Activated B cell treated with CpG ODN at 0.5 μM for 24 hours (primary cell): ENCODE measurements at regions of chr2 and their contacts with region 1.

Region 1: GRCh38 chr2:227766373-227766883 is 20.7 kb downstream of the SCYGR8 start:
- DNase-seq: peak; percentile 40
- ATAC-seq: peak; percentile 90
- H3K4me3 Mint-ChIP-seq: no peak overlapping the region
- H3K27ac Mint-ChIP-seq: no peak overlapping the region
- H3K4me1 Mint-ChIP-seq: no peaks in the 10 kb centered on the region
- H3K27me3 Mint-ChIP-seq: peaks cover 2% of the 10 kb centered on the region
- CTCF ChIP-seq: peak; percentile 68

Region 2: DNA sequence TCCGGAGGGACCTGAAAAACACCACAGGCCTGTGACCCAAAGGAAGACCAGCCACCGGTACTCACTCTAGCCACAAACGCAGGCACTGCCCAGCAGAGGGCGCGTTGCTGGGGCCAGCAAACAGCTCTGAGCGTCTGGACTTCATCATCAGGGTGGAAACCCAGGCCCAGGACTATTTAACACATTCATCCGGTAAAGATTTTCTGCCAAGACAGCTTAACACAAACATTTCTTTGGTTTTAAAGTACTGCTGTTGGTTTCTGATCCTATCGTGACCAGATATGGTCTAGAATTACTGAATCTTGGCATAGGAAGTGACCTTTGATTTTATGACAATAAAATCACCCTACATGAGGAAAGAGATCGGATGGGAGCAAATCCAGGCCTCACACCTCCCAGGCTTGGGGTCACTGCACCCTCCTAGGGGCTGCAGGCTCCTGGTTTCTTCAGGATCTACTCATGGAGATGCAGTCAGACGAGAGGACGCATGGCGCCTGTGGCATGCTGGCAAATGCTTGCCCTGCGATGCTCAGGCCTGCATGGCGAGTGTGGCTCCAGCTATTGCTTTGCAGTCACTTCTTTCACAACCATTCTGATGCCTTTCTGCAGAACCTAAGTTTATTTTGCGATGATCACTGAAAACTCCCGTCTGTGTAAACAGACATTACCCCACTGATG is 732.8 kb before region 1 on chr2:
- CTCF ChIA-PET with region 1: interaction called, 3 read pairs
- POLR2A ChIA-PET with region 1: no interaction called
- intact Hi-C with region 1: loop called (anchors 10 kb)
- DNase-seq: no peak
- ATAC-seq: no peak
- H3K4me3 Mint-ChIP-seq: no peak overlapping the region
- H3K27ac Mint-ChIP-seq: no peak overlapping the region
- H3K4me1 Mint-ChIP-seq: no peaks in the 10 kb centered on the region
- H3K27me3 Mint-ChIP-seq: no peaks in the 10 kb centered on the region
- CTCF ChIP-seq: no peak

Region 3: GRCh38 chr2:227238238-227239237 is 527.9 kb before region 1 on chr2:
- CTCF ChIA-PET with region 1: interaction called, 39 read pairs
- POLR2A ChIA-PET with region 1: no interaction called
- intact Hi-C with region 1: loop called (anchors 1 kb)
- DNase-seq: peak; percentile 28
- ATAC-seq: peak; percentile 37
- H3K4me3 Mint-ChIP-seq: no peak overlapping the region
- H3K27ac Mint-ChIP-seq: no peak overlapping the region
- H3K4me1 Mint-ChIP-seq: no peaks in the 10 kb centered on the region
- H3K27me3 Mint-ChIP-seq: no peaks in the 10 kb centered on the region
- CTCF ChIP-seq: peak; percentile 99

Region 4: DNA sequence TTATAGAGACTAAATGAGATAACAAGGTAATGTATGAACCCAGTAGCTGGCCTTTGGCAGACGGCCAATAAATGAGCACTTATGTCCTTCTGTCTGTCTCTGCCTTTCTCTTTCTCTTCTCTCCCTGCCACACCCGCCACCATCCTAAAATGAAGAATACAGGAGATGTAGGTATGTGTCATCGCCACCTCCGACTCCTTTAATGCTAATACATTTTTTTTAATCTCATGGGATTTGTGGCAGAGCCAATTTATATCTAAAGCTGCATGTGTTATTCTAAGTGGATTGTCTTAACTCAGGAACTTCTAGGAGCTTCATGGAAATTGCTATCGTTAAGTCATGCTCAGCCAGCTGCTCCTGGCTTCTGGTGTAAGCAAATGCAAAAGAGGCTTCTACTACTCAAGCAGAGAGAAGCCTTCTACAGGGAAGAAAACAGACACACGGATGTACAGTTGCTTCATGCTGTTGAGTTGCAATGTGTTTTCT is 389.5 kb before region 1 on chr2:
- CTCF ChIA-PET with region 1: no interaction called
- POLR2A ChIA-PET with region 1: no interaction called
- intact Hi-C with region 1: no loop called
- DNase-seq: no peak
- ATAC-seq: no peak
- H3K4me3 Mint-ChIP-seq: no peak overlapping the region
- H3K27ac Mint-ChIP-seq: no peak overlapping the region
- H3K4me1 Mint-ChIP-seq: peaks cover 7% of the 10 kb centered on the region
- H3K27me3 Mint-ChIP-seq: peaks cover 3% of the 10 kb centered on the region
- CTCF ChIP-seq: no peak

Region 5: DNA sequence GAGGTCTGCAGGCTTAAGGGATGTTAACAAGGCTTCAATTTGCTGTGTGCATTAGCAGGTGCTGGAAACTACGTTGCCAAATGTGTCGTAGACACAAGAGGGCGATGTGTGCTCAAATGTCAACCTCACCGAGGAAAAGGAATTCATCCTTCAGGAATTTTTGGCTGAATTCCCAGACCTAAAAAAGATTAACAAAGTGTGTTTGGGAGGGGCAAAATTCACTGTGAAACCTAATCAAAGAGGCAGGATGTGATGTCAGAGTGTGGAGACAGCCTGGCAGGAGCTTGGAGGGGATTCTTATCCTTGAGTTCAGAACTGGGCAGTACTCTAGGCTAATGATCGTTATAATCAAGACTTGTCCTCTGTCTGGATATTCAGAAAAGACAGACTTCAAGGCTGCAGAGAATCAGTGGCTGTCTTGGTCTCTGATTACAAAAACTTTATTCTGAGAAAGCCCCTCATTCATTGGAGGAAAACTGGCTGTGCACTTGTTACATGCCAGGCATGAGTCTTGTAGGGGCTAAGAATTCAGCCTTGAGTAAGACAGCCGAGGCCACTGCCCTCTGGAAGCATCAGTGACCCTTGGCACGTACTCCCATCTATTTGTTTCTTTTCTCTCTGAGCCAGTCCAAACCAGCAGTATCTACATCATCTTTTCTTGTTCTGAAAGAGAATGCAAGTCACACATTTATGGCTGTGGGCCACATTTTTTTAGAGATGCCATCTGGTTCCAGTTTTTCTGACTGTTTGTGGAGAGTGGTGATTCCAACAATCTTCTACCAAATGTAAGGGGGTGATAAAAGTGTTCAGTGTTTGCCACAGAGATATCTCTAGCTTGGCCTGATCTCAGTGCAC is 360.0 kb before region 1 on chr2:
- CTCF ChIA-PET with region 1: interaction called, 39 read pairs
- POLR2A ChIA-PET with region 1: no interaction called
- intact Hi-C with region 1: loop called (anchors 1 kb)
- DNase-seq: no peak
- ATAC-seq: no peak
- H3K4me3 Mint-ChIP-seq: peak overlapping the region; percentile 35
- H3K27ac Mint-ChIP-seq: peak overlapping the region; percentile 5
- H3K4me1 Mint-ChIP-seq: peaks cover 46% of the 10 kb centered on the region
- H3K27me3 Mint-ChIP-seq: no peaks in the 10 kb centered on the region
- CTCF ChIP-seq: peak; percentile 30

Region 6: GRCh38 chr2:227479865-227480475 is 286.5 kb before region 1 on chr2:
- CTCF ChIA-PET with region 1: interaction called, 31 read pairs
- POLR2A ChIA-PET with region 1: no interaction called
- intact Hi-C with region 1: loop called (anchors 1 kb)
- DNase-seq: no peak
- ATAC-seq: peak; percentile 52
- H3K4me3 Mint-ChIP-seq: no peak overlapping the region
- H3K27ac Mint-ChIP-seq: peak overlapping the region; percentile 4
- H3K4me1 Mint-ChIP-seq: peaks cover 70% of the 10 kb centered on the region
- H3K27me3 Mint-ChIP-seq: no peaks in the 10 kb centered on the region
- CTCF ChIP-seq: no peak